OCI-LY7 (cell line): ENCODE measurements at regions of chr20 and their contacts with region 1.

Region 1: DNA sequence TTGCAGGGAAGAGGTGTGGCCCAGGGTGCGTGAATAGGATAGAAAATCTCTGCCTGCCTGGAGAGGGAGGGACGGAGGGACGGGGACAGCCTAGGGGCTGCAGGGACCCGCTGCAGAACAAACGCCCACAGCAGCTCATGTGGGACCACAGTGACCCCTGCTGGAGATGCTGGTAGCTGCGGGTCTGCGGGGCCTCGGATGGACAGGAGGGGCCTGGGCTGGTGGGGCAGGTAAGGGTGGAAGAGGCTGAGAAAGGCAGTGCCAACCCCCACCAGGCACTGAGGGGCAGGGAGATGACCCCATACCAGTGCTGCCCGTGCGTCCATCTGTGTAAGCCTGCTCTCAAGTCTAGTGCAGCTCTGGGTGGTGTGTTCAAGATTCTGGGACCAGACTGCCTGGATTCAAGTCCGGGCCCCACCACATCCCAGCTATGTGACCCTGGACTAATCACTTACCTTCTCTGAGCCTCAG is 39.4 kb downstream of the KIAA1755 start:
- DNase-seq: peak; percentile 62
- H3K4me3 ChIP-seq: no peak overlapping the region
- H3K27ac ChIP-seq: no peak overlapping the region
- H3K4me1 ChIP-seq: no peaks in the 10 kb centered on the region
- CTCF ChIP-seq: peak; percentile 89

Region 2: DNA sequence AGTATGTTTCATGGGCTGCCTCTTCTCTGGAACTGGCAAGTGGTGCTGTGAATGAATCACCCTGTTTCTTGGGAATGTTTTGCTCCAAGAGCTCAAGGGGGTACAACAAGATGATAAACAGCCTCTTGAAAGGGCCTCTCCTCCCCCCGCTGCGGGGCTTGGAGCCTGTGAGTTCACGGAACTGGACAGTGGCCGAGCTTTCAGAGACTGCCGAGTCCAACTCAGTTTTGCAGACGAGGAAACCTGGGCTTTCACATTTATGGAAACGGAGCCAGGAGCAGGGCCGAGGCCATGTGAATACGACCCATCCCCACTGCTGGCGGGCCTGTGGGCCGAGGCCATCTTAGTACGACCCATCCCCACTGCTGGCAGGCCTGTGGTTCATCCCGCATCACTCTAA is 893.4 kb before region 1 on chr20:
- CTCF ChIA-PET with region 1: no interaction called
- POLR2A ChIA-PET with region 1: no interaction called
- intact Hi-C with region 1: no loop called
- DNase-seq: no peak
- H3K4me3 ChIP-seq: no peak overlapping the region
- H3K27ac ChIP-seq: no peak overlapping the region
- H3K4me1 ChIP-seq: no peaks in the 10 kb centered on the region
- CTCF ChIP-seq: no peak

Region 3: GRCh38 chr20:37564388-37565133 is 656.6 kb before region 1 on chr20:
- CTCF ChIA-PET with region 1: no interaction called
- POLR2A ChIA-PET with region 1: no interaction called
- intact Hi-C with region 1: loop called (anchors 5 kb)
- DNase-seq: peak; percentile 47
- H3K4me3 ChIP-seq: no peak overlapping the region
- H3K27ac ChIP-seq: no peak overlapping the region
- H3K4me1 ChIP-seq: peaks cover 4% of the 10 kb centered on the region
- CTCF ChIP-seq: peak; percentile 93

Region 4: GRCh38 chr20:38201356-38201755 is 19.8 kb before region 1 on chr20:
- CTCF ChIA-PET with region 1: interaction called, 15 read pairs
- POLR2A ChIA-PET with region 1: interaction called, 3 read pairs
- intact Hi-C with region 1: no loop called
- DNase-seq: no peak
- H3K4me3 ChIP-seq: no peak overlapping the region
- H3K27ac ChIP-seq: no peak overlapping the region
- H3K4me1 ChIP-seq: no peaks in the 10 kb centered on the region
- CTCF ChIP-seq: no peak